ENCODE measurements at regions of chrX and their contacts with region 1.

Region 1: DNA sequence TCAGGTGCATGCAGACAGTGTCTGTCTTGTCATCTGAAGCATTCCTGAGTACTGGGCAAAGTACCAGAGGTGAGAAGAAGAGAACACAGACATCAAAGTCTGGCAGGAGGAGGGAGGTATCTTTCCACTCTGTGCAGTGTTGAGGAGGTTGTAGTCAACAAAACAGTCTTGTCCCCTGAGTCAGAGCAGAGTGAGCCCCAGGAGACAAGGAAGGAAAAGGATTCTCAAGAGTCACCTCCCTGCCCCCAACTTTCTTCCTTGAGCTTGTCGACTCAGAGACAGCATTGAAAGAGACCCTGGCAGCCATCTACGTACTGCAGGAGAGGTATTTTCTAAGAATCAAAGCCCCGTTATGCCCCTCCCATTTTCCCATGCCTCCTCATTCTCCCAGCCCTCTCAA is 4.4 kb upstream of the SRPX start:
- DNase-seq: no peak
- ATAC-seq: peak in 1 of 4 donors; percentile 30
- H3K4me3 ChIP-seq: peak overlapping the region in 7 of 12 donors; percentile 1 to 23 (median 17)
- H3K27ac ChIP-seq: peak overlapping the region in 9 of 12 donors; percentile 11 to 81 (median 68)
- H3K4me1 ChIP-seq: no peaks in the 10 kb centered on the region
- H3K27me3 ChIP-seq: peaks cover 0 to 40% (median 0%) of the 10 kb centered on the region in 9 donors
- CTCF ChIP-seq: no peak
- POLR2A ChIP-seq: no peak

Region 2: GRCh38 chrX:38260231-38260630 is 35.1 kb after region 1 on chrX:
- intact Hi-C with region 1: loop called in 1 of 10 experiments (anchors 5 kb)
- DNase-seq: no peak
- ATAC-seq: no peak
- H3K4me3 ChIP-seq: no peak overlapping the region
- H3K27ac ChIP-seq: no peak overlapping the region
- H3K4me1 ChIP-seq: no peaks in the 10 kb centered on the region
- H3K27me3 ChIP-seq: no peaks in the 10 kb centered on the region
- CTCF ChIP-seq: peak in 6 of 12 donors; percentile 13 to 29 (median 15)
- POLR2A ChIP-seq: no peak

Measured in heart left ventricle (tissue), 16 donors.